ENCODE measurements at regions of chrX and their contacts with region 1.

Region 1: GRCh38 chrX:97597954-97598353 is 714.2 kb downstream of the RPA4 start:
- DNase-seq: peak; percentile 49
- H3K4me3 Mint-ChIP-seq: no peak overlapping the region
- H3K27ac Mint-ChIP-seq: peak overlapping the region; percentile 81
- H3K4me1 Mint-ChIP-seq: peaks cover 7% of the 10 kb centered on the region
- H3K27me3 Mint-ChIP-seq: no peaks in the 10 kb centered on the region

Region 2: GRCh38 chrX:97563531-97564133 is 34.3 kb before region 1 on chrX:
- CTCF ChIA-PET with region 1: no interaction called
- POLR2A ChIA-PET with region 1: no interaction called
- intact Hi-C with region 1: loop called (anchors 5 kb)
- DNase-seq: peak; percentile 59
- H3K4me3 Mint-ChIP-seq: peak overlapping the region; percentile 59
- H3K27ac Mint-ChIP-seq: peak overlapping the region; percentile 54
- H3K4me1 Mint-ChIP-seq: peaks cover 10% of the 10 kb centered on the region
- H3K27me3 Mint-ChIP-seq: no peaks in the 10 kb centered on the region

Region 3: GRCh38 chrX:97629597-97629985 is 31.6 kb after region 1 on chrX:
- CTCF ChIA-PET with region 1: no interaction called
- POLR2A ChIA-PET with region 1: no interaction called
- intact Hi-C with region 1: no loop called
- DNase-seq: no peak
- H3K4me3 Mint-ChIP-seq: no peak overlapping the region
- H3K27ac Mint-ChIP-seq: no peak overlapping the region
- H3K4me1 Mint-ChIP-seq: no peaks in the 10 kb centered on the region
- H3K27me3 Mint-ChIP-seq: no peaks in the 10 kb centered on the region

Region 4: GRCh38 chrX:97938706-97939105 is 340.8 kb after region 1 on chrX:
- CTCF ChIA-PET with region 1: no interaction called
- POLR2A ChIA-PET with region 1: no interaction called
- intact Hi-C with region 1: no loop called
- DNase-seq: no peak
- H3K4me3 Mint-ChIP-seq: no peak overlapping the region
- H3K27ac Mint-ChIP-seq: no peak overlapping the region
- H3K4me1 Mint-ChIP-seq: no peaks in the 10 kb centered on the region
- H3K27me3 Mint-ChIP-seq: no peaks in the 10 kb centered on the region

Measured in activated CD4-positive, alpha-beta memory T cell treated with anti-CD3 and anti-CD28 coated beads for 36 hours (primary cell).